PC-9 (cell line): ENCODE measurements at regions of chr1 and their contacts with region 1.

Region 1: GRCh38 chr1:94025383-94026340 is 95.3 kb downstream of the ABCA4 start:
- DNase-seq: peak; percentile 54 to 77
- H3K4me3 ChIP-seq: no peak overlapping the region
- H3K27ac ChIP-seq: no peak overlapping the region
- H3K4me1 ChIP-seq: peaks cover 49% of the 10 kb centered on the region
- H3K27me3 ChIP-seq: no peaks in the 10 kb centered on the region
- CTCF ChIP-seq: peak; percentile 91

Region 2: DNA sequence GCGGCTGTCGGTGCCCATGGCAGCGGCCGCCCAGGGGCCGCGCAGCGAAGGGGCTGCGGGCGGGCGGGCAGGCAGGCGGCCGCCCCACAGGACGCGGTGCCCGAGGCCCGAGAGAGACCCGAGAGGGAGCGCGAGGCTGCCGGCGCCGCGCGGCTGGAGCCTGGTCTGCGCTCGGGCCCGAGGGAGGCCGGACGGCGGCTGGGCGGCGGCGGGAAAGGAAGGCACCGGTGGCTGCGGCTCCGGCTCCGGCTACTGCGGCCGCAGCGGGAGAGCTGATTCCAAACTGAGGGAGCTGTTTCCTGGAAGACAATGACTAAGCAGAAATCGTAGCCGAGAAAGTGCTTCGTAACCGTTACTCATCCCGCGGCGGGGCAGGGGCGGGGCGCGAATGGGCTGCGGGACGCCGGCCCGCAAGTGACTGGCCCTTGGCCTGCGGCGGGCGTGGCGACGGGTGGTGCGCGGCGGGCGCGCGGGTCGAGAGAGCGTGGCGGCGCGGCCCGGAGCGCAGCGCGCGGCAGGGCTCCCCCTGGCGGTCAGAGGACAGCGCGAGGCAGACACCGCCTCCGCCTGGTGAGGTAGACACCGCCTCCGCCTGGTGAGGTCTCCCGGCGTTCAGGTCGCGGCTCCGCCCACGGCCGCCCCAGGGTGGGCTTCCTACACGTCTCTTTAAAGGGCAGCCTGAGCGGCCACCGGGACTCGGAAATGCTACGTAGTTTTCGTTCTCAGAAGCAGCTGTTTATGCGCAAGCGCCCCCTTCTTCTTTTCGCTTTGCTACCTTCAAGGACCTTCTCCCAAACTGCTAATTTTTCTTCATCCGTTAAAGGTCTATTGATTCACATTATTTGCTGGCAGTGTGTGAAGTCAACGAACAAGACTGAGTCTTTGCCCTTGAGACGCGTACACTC is 116.3 kb before region 1 on chr1 and contains the start of gene GCLM:
- CTCF ChIA-PET with region 1: interaction called, 6 read pairs
- POLR2A ChIA-PET with region 1: interaction called, 12 read pairs
- intact Hi-C with region 1: loop called (anchors 1 kb)
- DNase-seq: peak; percentile 94 to 97
- H3K4me3 ChIP-seq: peak within 1 kb of the TSS; percentile 68
- H3K27ac ChIP-seq: peak within 1 kb of the TSS; percentile 80
- H3K4me1 ChIP-seq: peaks cover 32% of the 10 kb centered on the region
- H3K27me3 ChIP-seq: no peaks in the 10 kb centered on the region
- CTCF ChIP-seq: peak; percentile 80
- total RNA-seq, gene GCLM: 270 and 272 TPM in 2 replicates

Region 3: DNA sequence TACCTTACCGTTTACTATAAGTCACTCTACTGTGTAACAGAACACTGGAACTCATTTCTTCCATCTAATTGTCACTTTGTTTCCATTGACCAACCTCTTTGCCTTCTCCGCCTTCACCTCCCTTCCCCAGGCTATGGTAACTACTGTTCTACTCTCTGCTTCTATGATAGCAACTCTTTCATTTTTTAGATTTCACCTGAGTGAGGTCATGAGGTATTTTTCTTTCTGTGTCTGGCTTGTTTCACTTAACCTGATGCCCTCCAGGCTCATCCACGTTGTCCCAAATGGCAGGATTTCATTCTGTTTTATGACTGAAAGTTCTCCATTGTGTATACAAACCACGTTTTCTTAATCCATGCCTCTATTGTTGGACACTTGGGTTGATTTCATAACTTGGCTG is 81.0 kb before region 1 on chr1:
- CTCF ChIA-PET with region 1: no interaction called
- POLR2A ChIA-PET with region 1: no interaction called
- intact Hi-C with region 1: no loop called
- DNase-seq: no peak
- H3K4me3 ChIP-seq: no peak overlapping the region
- H3K27ac ChIP-seq: no peak overlapping the region
- H3K4me1 ChIP-seq: no peaks in the 10 kb centered on the region
- H3K27me3 ChIP-seq: no peaks in the 10 kb centered on the region
- CTCF ChIP-seq: no peak

Region 4: GRCh38 chr1:94039514-94039870 is 13.8 kb after region 1 on chr1:
- CTCF ChIA-PET with region 1: interaction called, 18 read pairs
- POLR2A ChIA-PET with region 1: interaction called, 8 read pairs
- intact Hi-C with region 1: loop called (anchors 2 kb)
- DNase-seq: peak; percentile 63 to 68
- H3K4me3 ChIP-seq: no peak overlapping the region
- H3K27ac ChIP-seq: no peak overlapping the region
- H3K4me1 ChIP-seq: peaks cover 40% of the 10 kb centered on the region
- H3K27me3 ChIP-seq: no peaks in the 10 kb centered on the region
- CTCF ChIP-seq: peak; percentile 99

Region 5: GRCh38 chr1:94463765-94464330 is 438.2 kb after region 1 on chr1:
- CTCF ChIA-PET with region 1: interaction called, 4 read pairs
- POLR2A ChIA-PET with region 1: interaction called, 4 read pairs
- intact Hi-C with region 1: loop called (anchors 2 kb)
- DNase-seq: peak; percentile 29 to 67
- H3K4me3 ChIP-seq: no peak overlapping the region
- H3K27ac ChIP-seq: peak overlapping the region; percentile 11; the same call in 1 of the 2 replicates
- H3K4me1 ChIP-seq: peaks cover 5% of the 10 kb centered on the region
- H3K27me3 ChIP-seq: no peaks in the 10 kb centered on the region
- CTCF ChIP-seq: peak; percentile 86